ENCODE measurements at regions of chr1 and their contacts with region 1.

Region 1: DNA sequence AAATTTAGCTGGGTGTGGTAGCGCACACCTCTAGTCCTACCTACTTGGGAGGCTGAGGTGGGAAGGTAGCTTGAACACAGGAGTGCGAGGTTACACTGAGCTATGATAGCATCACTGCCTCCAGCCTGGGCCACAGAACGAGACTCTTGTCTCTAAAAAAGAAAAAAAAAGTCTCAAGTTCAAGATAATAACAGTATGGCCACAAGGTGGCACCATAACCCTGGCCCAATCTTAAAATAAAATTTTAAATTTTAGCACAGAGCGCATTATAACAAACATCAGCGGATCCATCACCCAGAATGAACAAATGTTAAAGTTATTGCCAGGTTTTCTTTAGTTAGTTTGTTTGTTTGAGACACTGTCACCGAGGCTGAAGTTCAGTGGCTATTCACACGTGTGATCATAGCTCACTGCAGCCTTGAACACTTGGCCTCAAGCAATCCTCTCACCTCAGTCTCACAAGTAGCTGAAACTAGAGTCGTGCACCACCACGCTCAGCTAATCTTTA is 2.9 kb upstream of the HTR6 start:
- DNase-seq: no peak
- ATAC-seq: no peak
- H3K4me3 ChIP-seq: no peak overlapping the region
- H3K27ac ChIP-seq: no peak overlapping the region
- H3K4me1 ChIP-seq: peaks cover 3 to 24% (median 6%) of the 10 kb centered on the region in 9 donors
- H3K27me3 ChIP-seq: peaks cover 21 to 49% (median 40%) of the 10 kb centered on the region in 7 donors
- CTCF ChIP-seq: peak; percentile 54 to 84 (median 78)

Region 2: GRCh38 chr1:19341201-19342072 is 320.3 kb before region 1 on chr1:
- intact Hi-C with region 1: loop called in 2 of 10 experiments (anchors 5 to 10 kb)
- DNase-seq: peak; percentile 57 to 75
- ATAC-seq: peak; percentile 23 to 62 (median 49)
- H3K4me3 ChIP-seq: no peak overlapping the region
- H3K27ac ChIP-seq: peak overlapping the region in 5 of 10 donors; percentile 7 to 41 (median 23)
- H3K4me1 ChIP-seq: peaks cover 3 to 30% (median 15%) of the 10 kb centered on the region in 9 donors
- H3K27me3 ChIP-seq: no peaks in the 10 kb centered on the region
- CTCF ChIP-seq: peak; percentile 80 to 94 (median 84)

Region 3: GRCh38 chr1:19704247-19705113 is 42.7 kb after region 1 on chr1:
- intact Hi-C with region 1: loop called in 8 of 10 experiments (anchors 1 to 5 kb)
- DNase-seq: peak; percentile 62 to 72
- ATAC-seq: peak; percentile 83 to 91 (median 89)
- H3K4me3 ChIP-seq: no peak overlapping the region
- H3K27ac ChIP-seq: no peak overlapping the region
- H3K4me1 ChIP-seq: peaks cover 0 to 10% (median 9%) of the 10 kb centered on the region in 9 donors
- H3K27me3 ChIP-seq: no peaks in the 10 kb centered on the region
- CTCF ChIP-seq: peak; percentile 89 to 96 (median 93)

Region 4: DNA sequence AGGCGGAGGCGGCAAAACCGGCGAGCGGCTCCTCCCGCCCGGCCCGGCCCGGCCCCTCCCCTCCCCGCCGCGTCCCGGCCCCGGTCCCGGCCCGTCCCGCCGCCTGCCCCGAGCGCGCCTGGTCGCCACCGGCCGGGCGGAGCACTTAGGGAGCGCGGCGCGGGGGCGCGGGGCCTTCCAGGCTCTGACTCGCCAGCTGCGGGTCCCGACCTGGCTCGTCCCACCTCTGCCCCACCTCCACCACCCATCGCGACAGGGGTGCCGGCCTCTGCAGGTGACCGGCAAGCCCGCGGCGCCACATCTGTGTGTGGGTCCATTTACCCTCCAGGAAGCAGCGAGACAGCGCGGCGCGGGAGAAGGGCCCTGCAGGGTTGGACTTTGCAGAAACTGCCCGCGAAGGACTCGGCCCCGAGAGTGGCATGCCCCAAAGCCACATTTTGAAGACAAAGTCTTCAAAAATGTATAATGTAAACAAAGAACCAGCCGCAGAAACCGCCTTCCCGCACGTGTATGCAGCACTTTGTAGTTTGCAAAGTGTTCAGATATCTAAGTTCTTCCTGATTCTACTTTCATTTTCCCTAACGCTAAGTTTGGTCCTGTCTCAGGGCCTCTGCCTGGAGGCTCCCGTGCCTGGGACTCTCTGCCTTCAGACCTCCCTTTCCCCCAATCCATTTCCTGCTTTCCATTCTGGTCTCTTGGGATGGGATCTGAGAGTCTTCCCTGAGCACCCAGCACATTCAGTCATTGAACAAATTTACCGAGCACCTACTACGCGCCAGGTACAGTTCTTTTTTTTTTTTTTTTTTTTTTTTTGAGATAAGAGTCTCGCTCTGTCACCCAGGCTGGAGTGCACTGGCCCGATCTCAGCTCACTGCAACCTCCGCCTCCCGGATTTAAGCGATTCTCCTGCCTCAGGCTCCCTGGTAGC is 138.4 kb after region 1 on chr1 and contains the start of gene TMCO4:
- intact Hi-C with region 1: no loop called
- DNase-seq: peak; percentile 19 to 56
- ATAC-seq: peak; percentile 60 to 86 (median 74)
- H3K4me3 ChIP-seq: peak within 1 kb of the TSS; percentile 47 to 84 (median 74)
- H3K27ac ChIP-seq: peak within 1 kb of the TSS; percentile 59 to 91 (median 78)
- H3K4me1 ChIP-seq: peaks cover 0 to 20% (median 15%) of the 10 kb centered on the region in 9 donors
- H3K27me3 ChIP-seq: peaks cover 0 to 6% (median 0%) of the 10 kb centered on the region in 7 donors
- CTCF ChIP-seq: peak in 1 of 9 donors; percentile 3
- total RNA-seq, gene TMCO4: 6.6 to 9.7 (median 8.0) TPM

Region 5: GRCh38 chr1:19861034-19861433 is 199.3 kb after region 1 on chr1:
- intact Hi-C with region 1: no loop called
- DNase-seq: no peak
- ATAC-seq: no peak
- H3K4me3 ChIP-seq: no peak overlapping the region
- H3K27ac ChIP-seq: no peak overlapping the region
- H3K4me1 ChIP-seq: no peaks in the 10 kb centered on the region
- H3K27me3 ChIP-seq: peaks cover 0 to 40% (median 17%) of the 10 kb centered on the region in 7 donors
- CTCF ChIP-seq: no peak